ENCODE measurements at regions of chr1 and their contacts with region 1.

Region 1: DNA sequence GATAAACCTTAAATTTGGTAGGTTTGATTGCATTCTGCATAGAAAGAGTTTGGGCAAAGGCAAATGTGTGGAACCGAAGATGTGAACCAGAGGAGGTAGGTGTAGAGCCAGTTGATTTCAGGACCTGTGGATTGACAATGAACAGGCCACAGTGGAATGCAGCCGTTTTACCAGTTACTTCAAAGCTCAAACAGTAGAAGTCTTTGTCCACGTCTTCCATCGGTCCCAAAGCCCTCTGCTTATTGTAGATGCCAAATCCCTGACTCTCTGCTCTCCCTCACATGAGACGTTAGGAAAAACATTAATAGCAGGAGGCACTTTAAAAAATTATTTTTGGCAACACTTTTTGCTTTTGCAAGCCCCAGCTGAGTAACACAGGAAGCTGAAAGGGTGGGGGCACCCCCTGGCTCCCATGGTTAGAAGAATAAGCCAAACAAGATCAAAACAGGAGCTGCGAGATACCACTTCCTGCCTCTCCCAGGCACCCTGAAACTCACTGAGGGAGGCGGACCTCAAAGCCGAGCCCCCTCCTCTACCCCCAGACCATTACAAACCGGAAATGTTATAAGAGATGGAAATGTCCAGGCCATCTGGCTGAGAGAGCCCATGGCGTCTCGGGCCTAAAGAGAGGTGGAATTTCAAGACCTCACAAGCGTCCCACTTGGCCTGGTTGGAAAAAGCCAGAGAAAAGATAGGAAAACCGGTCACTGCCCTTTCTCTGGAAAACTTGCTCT is 13.5 kb downstream of the TRAF3IP3 start:
- DNase-seq: peak; percentile 90
- H3K4me3 Mint-ChIP-seq: no peak overlapping the region
- H3K27ac Mint-ChIP-seq: no peak overlapping the region
- H3K4me1 Mint-ChIP-seq: peaks cover 5% of the 10 kb centered on the region
- H3K27me3 Mint-ChIP-seq: no peaks in the 10 kb centered on the region

Region 2: GRCh38 chr1:209674957-209675564 is 94.3 kb before region 1 on chr1 and contains the start of gene G0S2:
- CTCF ChIA-PET with region 1: no interaction called
- POLR2A ChIA-PET with region 1: interaction called, 4 read pairs
- intact Hi-C with region 1: loop called (anchors 1 kb)
- DNase-seq: peak; percentile 66
- H3K4me3 Mint-ChIP-seq: peak within 1 kb of the TSS; percentile 76
- H3K27ac Mint-ChIP-seq: peak within 1 kb of the TSS; percentile 68
- H3K4me1 Mint-ChIP-seq: peaks cover 68% of the 10 kb centered on the region
- H3K27me3 Mint-ChIP-seq: peaks cover 22% of the 10 kb centered on the region
- total RNA-seq, gene G0S2: 92.7 to 93.1 TPM

Region 3: GRCh38 chr1:209685821-209686220 is 83.5 kb before region 1 on chr1:
- CTCF ChIA-PET with region 1: no interaction called
- POLR2A ChIA-PET with region 1: no interaction called
- intact Hi-C with region 1: no loop called
- DNase-seq: peak; percentile 61
- H3K4me3 Mint-ChIP-seq: peak overlapping the region; percentile 2
- H3K27ac Mint-ChIP-seq: no peak overlapping the region
- H3K4me1 Mint-ChIP-seq: peaks cover 42% of the 10 kb centered on the region
- H3K27me3 Mint-ChIP-seq: no peaks in the 10 kb centered on the region

Region 4: DNA sequence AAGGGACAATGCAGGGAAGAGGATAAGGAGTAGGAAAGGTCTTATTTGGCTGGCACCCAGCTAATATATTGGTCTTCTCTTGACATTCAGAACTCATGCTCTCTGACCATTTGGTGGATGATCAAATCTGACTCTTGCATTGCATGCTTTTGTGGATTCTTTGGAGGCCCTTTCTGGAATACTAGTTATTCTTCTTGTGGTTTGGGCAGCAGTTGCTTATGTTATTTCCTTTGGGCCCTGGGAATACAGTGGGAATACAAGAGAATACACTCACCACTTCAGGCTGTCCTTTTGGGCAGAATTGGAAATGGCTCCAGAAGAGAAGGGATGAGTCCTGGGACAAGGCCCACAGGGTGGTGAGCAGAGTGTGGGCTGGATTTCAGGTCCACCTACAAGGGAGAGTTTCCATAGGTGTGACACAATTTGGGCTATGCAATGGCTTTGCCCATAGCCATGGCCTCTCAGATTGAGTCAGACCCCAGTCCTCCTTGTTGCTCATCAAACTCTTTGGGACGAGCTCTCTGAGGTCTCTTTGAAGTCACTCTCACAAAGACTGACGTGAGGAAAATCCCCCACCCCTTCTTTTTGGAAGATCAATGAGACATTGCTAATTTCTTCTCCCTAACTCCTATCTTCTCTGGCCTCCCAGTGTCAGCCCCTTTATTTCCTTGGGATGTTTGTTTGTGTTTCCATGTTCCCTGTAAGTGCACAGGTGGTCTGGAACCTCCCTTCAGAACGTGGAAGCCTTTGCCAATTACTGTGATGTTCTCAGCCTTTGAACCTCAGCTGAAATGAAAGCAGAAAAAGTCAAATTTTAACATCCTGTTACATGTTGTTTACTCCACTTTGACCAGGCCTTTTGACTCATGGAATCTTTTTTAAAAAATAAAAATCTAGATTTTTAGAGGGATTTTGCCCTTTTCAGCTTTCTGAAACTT is 45.3 kb before region 1 on chr1:
- CTCF ChIA-PET with region 1: interaction called, 4 read pairs
- POLR2A ChIA-PET with region 1: interaction called, 3 read pairs
- intact Hi-C with region 1: loop called (anchors 2 kb)
- DNase-seq: peak; percentile 79
- H3K4me3 Mint-ChIP-seq: peak overlapping the region; percentile 54
- H3K27ac Mint-ChIP-seq: peak overlapping the region; percentile 96
- H3K4me1 Mint-ChIP-seq: peaks cover 74% of the 10 kb centered on the region
- H3K27me3 Mint-ChIP-seq: no peaks in the 10 kb centered on the region

Region 5: GRCh38 chr1:209784265-209785169 is 15.2 kb after region 1 on chr1 and contains the start of gene C1orf74:
- CTCF ChIA-PET with region 1: interaction called, 9 read pairs
- POLR2A ChIA-PET with region 1: interaction called, 35 read pairs
- intact Hi-C with region 1: loop called (anchors 1 kb)
- DNase-seq: peak; percentile 100
- H3K4me3 Mint-ChIP-seq: peak within 1 kb of the TSS; percentile 93
- H3K27ac Mint-ChIP-seq: peak within 1 kb of the TSS; percentile 93
- H3K4me1 Mint-ChIP-seq: peaks cover 39% of the 10 kb centered on the region
- H3K27me3 Mint-ChIP-seq: peaks cover 3% of the 10 kb centered on the region
- total RNA-seq, gene C1orf74: 3.5 to 3.9 TPM

Region 6: GRCh38 chr1:210328746-210329503 is 559.6 kb after region 1 on chr1 and contains the start of gene HHAT:
- CTCF ChIA-PET with region 1: no interaction called
- POLR2A ChIA-PET with region 1: no interaction called
- intact Hi-C with region 1: loop called (anchors 5 kb)
- DNase-seq: peak; percentile 76
- H3K4me3 Mint-ChIP-seq: peak within 1 kb of the TSS; percentile 89
- H3K27ac Mint-ChIP-seq: peak within 1 kb of the TSS; percentile 91
- H3K4me1 Mint-ChIP-seq: peaks cover 42% of the 10 kb centered on the region
- H3K27me3 Mint-ChIP-seq: peaks cover 5% of the 10 kb centered on the region
- total RNA-seq, gene HHAT: 1.6 to 1.8 TPM